ENCODE measurements at regions of chr19 and their contacts with region 1.

Region 1: DNA sequence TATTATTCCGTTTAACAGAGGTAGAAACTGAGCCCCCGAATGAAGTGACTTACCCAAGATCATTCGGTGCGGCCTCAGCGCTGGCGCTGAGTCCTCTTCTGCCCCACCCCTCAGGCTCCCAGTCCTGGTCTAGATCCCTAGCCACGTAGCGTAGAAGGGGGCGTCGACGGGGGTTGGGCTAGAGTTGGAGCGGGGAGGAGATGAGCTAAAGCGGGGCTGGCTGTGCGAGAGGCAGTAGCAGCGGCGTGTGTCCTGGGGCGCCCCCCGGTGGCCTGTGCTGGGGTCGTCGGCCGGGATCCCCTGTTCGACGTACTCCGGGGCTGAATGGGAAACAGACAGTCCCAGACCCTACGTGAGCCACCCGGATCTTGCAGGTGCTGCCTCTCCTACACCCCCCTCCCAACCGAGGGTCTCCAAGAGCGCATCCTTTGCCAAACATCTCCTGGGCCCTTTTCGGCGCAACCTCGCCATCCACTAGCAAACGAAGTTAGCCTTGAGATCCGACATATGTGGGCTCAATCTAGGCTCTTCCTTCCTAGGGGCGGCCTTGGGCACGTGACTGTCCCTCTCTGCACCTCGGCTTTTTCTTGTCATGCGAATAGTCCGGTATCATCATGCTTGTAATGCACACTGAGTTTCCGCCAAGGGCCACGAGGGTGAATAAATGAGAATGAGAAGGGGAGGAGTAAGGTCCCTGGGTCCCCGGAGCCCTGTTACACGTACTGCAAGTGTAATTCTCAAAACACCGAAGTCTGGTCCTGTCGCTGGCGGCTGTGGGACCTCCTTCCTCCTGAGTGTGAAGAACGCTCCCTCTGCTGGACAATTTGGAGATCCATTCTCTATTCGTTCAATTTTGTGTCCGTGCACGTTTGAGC is 47.7 kb downstream of the CYP4F22 start:
- DNase-seq: peak; percentile 89
- ATAC-seq: peak; percentile 91
- H3K4me3 ChIP-seq: peak overlapping the region; percentile 20 to 65 (median 32); a peak in 5 of 6 replicates
- H3K27ac ChIP-seq: no peak overlapping the region
- H3K4me1 ChIP-seq: peaks cover 35% of the 10 kb centered on the region
- H3K27me3 ChIP-seq: no peaks in the 10 kb centered on the region; a peak in 1 of 5 replicates
- CTCF ChIP-seq: peak; percentile 95
- EP300 ChIP-seq: 0 out of 4 replicates have a peak, but pooled peaks of 1 of the 2 experiments have one; percentile 47
- POLR2A ChIP-seq: no peak
- RAD21 ChIP-seq: peak; percentile 95

Region 2: DNA sequence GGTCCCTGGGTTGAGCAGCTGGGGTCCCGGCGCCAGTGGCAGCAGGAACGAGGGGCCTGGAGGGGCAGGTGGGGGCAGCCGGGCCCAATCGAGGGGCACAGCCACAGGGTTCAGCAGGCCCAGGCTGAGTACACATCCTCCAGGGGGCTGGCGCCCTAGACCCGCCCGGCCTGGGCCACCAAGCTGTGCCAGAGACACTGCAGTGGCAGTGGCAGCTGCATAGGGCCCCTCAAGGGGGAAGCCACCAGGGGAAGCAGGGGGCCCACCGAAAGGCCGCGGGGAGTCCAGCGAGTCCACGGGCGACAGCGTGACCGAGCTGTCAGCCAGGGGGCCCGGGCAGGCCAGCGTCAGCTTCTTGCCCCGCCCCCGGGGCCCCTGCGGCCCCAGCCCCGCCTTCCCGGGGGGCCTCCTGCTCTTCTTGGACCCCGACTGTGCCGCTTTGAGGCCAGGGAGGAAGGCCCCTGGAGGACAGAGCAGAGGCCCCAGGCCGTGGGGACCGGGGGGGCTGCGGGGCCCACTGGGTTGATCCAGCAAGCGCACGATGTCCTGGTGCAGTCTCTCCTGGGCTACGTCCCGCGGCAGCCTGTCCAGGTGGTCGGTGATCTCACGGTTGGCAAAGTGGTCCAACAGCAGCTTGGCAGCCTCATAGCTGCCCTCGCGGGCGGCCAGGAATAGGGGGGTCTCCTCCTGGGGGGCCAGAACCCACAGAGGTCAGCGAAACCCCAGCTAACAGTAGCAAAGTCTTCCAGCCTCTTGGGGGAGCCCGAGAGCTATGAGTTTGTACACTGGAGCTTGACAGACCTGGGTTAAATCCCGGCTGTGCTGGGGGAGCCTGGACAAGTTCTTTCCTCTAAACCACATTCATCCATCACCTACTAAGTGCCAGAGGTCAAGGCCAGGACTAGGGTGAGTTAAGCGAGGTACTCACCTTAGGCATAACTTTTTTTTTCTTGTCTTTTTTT is 394.7 kb before region 1 on chr19:
- CTCF ChIA-PET with region 1: interaction called, 3 read pairs
- POLR2A ChIA-PET with region 1: no interaction called
- in situ Hi-C with region 1: loop called (anchors 5 kb)
- intact Hi-C with region 1: no loop called
- DNase-seq: peak; percentile 61
- ATAC-seq: peak; percentile 90
- H3K4me3 ChIP-seq: peak overlapping the region in 1 of 3 experiments; percentile 28; a peak in 1 of 6 replicates
- H3K27ac ChIP-seq: no peak overlapping the region
- H3K4me1 ChIP-seq: no peaks in the 10 kb centered on the region
- H3K27me3 ChIP-seq: peaks cover 0 to 2% of the 10 kb centered on the region in 2 experiments; a peak in 2 of 5 replicates
- CTCF ChIP-seq: peak; percentile 83
- EP300 ChIP-seq: no peak
- POLR2A ChIP-seq: no peak
- RAD21 ChIP-seq: 0 out of 2 replicates have a peak, but pooled peaks have one; percentile 33

Region 3: DNA sequence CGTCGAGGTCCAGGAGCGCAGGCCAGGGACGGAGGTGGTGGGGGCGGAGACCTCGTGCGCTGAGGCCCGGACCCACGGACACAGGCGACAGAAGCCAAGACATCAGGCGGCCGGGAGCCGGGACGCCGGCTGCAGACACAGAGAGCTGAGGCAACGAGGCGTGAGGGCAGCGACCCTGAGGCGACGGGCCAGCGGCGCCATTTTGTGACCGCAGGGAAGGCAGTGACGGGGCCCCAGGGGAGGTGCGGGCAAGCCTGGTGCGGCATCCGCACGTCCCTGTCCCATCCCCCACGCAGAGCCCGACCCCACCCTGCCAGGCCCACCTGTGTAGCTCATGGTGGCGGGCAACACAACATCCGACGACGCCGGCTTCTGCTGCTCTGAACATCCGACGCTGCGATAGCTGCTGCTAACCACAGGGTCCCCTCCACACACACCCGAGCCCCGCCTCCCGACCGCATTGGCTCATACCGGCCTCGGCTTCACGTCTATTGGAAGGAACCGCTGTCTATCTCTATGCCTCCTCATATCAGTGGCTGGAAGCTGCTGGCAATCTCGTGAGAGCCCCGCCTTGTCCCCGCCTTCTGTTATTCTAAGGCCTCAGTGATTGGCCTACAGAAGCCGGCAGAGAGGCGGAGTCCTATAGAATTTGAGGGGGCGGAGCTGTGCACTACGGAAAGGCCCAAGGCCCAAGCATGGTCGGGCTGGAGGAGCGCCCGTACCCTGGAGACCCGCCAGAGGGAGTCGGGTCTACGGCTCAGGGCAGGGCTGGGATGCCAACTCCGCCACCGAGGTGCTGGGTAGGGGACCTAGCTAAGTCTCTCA is 137.2 kb before region 1 on chr19 and contains the start of gene AKAP8L:
- CTCF ChIA-PET with region 1: interaction called, 35 read pairs
- POLR2A ChIA-PET with region 1: interaction called, 18 read pairs
- in situ Hi-C with region 1: loop called (anchors 10 kb)
- intact Hi-C with region 1: loop called (anchors 1 kb)
- DNase-seq: peak; percentile 99
- ATAC-seq: peak; percentile 98
- H3K4me3 ChIP-seq: peak within 1 kb of the TSS; percentile 84 to 97 (median 85)
- H3K27ac ChIP-seq: peak within 1 kb of the TSS; percentile 81
- H3K4me1 ChIP-seq: peaks cover 34% of the 10 kb centered on the region
- H3K27me3 ChIP-seq: no peaks in the 10 kb centered on the region; a peak in 1 of 5 replicates
- CTCF ChIP-seq: peak; percentile 92
- EP300 ChIP-seq: peak in 1 of 2 experiments; percentile 8; a peak in 1 of 4 replicates
- POLR2A ChIP-seq: peak; percentile 97 to 98
- RAD21 ChIP-seq: peak; percentile 91
- total RNA-seq, gene AKAP8L: 27.3 and 48.2 TPM in 2 replicates

Region 4: DNA sequence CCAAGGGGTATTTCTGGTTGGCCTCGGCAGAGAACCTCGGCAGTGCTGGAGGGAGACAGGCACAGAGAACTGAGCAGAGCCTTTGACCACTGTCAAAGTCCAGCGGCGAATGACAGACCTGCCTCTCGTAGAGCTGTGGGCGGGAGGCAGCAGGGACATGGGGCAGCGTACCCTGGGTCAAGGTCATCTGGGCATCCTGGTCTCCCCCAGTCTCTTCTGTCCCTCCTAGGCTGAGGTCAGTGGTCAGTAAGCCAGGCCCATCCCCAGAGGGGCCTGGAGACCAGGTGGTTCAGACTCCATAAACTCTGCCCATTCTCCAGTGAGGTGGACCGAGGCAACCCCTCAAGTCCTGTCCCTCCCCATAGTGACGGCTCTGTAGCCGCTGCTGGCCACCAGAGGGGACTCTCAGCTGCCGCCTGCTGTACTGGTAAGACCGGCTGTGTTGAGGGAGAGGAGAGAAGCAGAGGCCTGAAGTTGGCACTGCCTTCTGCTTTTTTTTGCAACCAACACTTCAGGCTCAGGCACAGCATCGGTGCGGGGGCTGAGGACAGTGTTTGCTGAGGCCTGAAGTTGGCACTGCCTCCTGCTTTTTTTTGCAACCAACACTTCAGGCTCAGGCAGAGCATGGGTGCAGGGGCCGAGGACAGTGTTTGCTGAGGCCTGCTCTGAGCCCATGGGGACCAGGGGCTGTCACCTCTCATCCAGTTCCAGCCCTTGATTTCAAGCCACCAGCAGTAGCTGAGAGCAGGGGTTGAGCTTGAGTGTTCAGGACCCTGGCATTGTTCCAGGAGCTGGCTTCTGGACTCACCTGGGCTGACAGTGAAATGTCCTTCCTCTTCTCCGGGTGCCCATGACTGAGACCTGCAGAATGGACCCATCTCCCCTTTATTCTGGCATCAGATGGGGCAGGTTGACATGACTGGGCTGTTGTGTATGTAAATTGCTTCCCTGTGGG is 76.3 kb before region 1 on chr19 and contains the start of gene PGLYRP2:
- CTCF ChIA-PET with region 1: no interaction called
- POLR2A ChIA-PET with region 1: interaction called, 3 read pairs
- in situ Hi-C with region 1: no loop called
- intact Hi-C with region 1: loop called (anchors 5 kb)
- DNase-seq: peak; percentile 31
- ATAC-seq: peak; percentile 91
- H3K4me3 ChIP-seq: peak within 1 kb of the TSS in 1 of 3 experiments; percentile 48; a peak in 1 of 6 replicates
- H3K27ac ChIP-seq: peak within 1 kb of the TSS; percentile 24
- H3K4me1 ChIP-seq: peaks cover 34% of the 10 kb centered on the region
- H3K27me3 ChIP-seq: no peaks in the 10 kb centered on the region
- CTCF ChIP-seq: peak; percentile 72
- EP300 ChIP-seq: peak in 1 of 2 experiments; percentile 34; a peak in 1 of 4 replicates
- POLR2A ChIP-seq: no peak
- RAD21 ChIP-seq: no peak
- total RNA-seq, gene PGLYRP2: 0.49 and 1.0 TPM in 2 replicates

Region 5: GRCh38 chr19:15532779-15533521 is 23.0 kb before region 1 on chr19:
- CTCF ChIA-PET with region 1: no interaction called
- POLR2A ChIA-PET with region 1: no interaction called
- in situ Hi-C with region 1: no loop called
- intact Hi-C with region 1: no loop called
- DNase-seq: no peak
- ATAC-seq: peak; percentile 41; the same call in 1 of the 3 replicates
- H3K4me3 ChIP-seq: no peak overlapping the region
- H3K27ac ChIP-seq: no peak overlapping the region
- H3K4me1 ChIP-seq: no peaks in the 10 kb centered on the region
- H3K27me3 ChIP-seq: 0 out of 5 replicates have a peak, but pooled peaks cover 0 to 4% of the 10 kb centered on the region in 2 experiments
- CTCF ChIP-seq: peak; percentile 37
- EP300 ChIP-seq: no peak
- POLR2A ChIP-seq: no peak
- RAD21 ChIP-seq: no peak